ENCODE measurements at regions of chr15 and their contacts with region 1.

Region 1: GRCh38 chr15:60243769-60244168 is 154.0 kb downstream of the ANXA2 start:
- DNase-seq: no peak
- ATAC-seq: no peak
- H3K4me3 ChIP-seq: no peak overlapping the region
- H3K27ac ChIP-seq: no peak overlapping the region
- H3K4me1 ChIP-seq: no peaks in the 10 kb centered on the region
- H3K27me3 ChIP-seq: peaks cover 2% of the 10 kb centered on the region; the same call in 1 of the 2 replicates
- CTCF ChIP-seq: no peak
- POLR2A ChIP-seq: no peak
- RAD21 ChIP-seq: no peak

Region 2: DNA sequence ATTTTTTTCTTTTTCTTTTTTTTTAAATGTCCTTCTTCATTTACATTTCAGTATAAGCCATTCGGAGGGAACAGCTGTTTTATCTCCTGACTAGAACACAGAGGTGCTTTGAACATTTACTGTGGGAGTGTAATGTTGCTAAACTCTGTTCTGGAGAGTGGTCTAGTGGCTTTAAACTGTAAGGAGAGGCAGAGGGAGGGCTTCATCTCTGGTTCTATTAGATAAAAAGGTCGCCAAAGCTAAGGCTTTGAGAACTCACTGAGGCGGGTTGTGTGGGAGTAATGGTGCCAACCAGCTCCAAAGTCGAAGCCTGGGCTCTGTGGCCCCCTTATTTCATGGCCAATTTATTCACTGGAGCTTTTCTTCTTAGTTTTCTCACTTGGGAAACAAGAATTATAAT is 20.8 kb after region 1 on chr15:
- CTCF ChIA-PET with region 1: no interaction called
- POLR2A ChIA-PET with region 1: no interaction called
- dilution Hi-C with region 1: no loop called
- in situ Hi-C with region 1: no loop called
- intact Hi-C with region 1: loop called (anchors 2 kb)
- DNase-seq: no peak
- ATAC-seq: no peak
- H3K4me3 ChIP-seq: no peak overlapping the region
- H3K27ac ChIP-seq: no peak overlapping the region
- H3K4me1 ChIP-seq: no peaks in the 10 kb centered on the region
- H3K27me3 ChIP-seq: peaks cover 2% of the 10 kb centered on the region; the same call in 1 of the 2 replicates
- CTCF ChIP-seq: no peak
- POLR2A ChIP-seq: no peak
- RAD21 ChIP-seq: no peak

Region 3: GRCh38 chr15:61750381-61751084 is 1506.8 kb after region 1 on chr15:
- CTCF ChIA-PET with region 1: no interaction called
- POLR2A ChIA-PET with region 1: no interaction called
- dilution Hi-C with region 1: no loop called
- in situ Hi-C with region 1: no loop called
- intact Hi-C with region 1: no loop called
- DNase-seq: no peak
- ATAC-seq: no peak
- H3K4me3 ChIP-seq: no peak overlapping the region
- H3K27ac ChIP-seq: no peak overlapping the region
- H3K4me1 ChIP-seq: no peaks in the 10 kb centered on the region
- H3K27me3 ChIP-seq: no peaks in the 10 kb centered on the region
- CTCF ChIP-seq: no peak
- POLR2A ChIP-seq: no peak
- RAD21 ChIP-seq: no peak

Measured in IMR-90 (cell line).